Activated CD4-positive, alpha-beta T cell treated with anti-CD3 and anti-CD28 coated beads, Interleukin-2, amount 10 ng/mL, durations not matched to agents 7 days and 5 days (primary cell): ENCODE measurements at regions of chr5 and their contacts with region 1.

Region 1: DNA sequence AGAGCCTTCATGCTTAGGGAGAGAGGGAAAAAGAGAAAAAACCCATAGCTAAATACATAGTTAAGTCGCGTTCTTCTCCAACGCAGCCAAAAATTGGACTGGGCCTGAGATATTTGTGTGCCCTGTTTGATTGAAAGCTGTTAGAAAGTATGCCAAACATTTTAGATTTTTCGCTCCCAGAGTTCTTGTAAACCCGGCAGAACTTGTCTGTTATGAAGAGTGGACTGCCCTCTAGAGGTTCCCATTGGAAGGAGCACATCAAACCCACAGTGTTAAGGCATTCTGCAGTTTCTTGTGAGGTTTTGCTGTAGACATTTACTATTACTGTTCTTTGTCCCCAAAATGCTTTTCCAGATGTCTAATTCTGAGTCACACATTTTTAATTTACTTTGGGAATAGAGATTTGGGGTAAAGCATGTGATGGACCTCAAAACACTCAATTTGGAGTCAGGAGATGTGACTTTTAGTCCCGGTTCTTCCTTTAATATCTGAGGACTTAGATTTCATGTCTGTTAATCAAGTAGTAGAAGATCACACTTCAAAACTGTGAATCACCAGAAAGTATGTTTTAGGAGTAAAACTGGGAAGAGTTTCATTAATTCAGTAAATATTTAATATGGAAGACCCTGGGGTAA is 96.6 kb downstream of the PCSK1 start:
- DNase-seq: peak; percentile 73
- H3K4me3 Mint-ChIP-seq: no peak overlapping the region
- H3K27ac Mint-ChIP-seq: no peak overlapping the region
- H3K4me1 Mint-ChIP-seq: peaks cover 8% of the 10 kb centered on the region
- H3K27me3 Mint-ChIP-seq: peaks cover 12% of the 10 kb centered on the region

Region 2: DNA sequence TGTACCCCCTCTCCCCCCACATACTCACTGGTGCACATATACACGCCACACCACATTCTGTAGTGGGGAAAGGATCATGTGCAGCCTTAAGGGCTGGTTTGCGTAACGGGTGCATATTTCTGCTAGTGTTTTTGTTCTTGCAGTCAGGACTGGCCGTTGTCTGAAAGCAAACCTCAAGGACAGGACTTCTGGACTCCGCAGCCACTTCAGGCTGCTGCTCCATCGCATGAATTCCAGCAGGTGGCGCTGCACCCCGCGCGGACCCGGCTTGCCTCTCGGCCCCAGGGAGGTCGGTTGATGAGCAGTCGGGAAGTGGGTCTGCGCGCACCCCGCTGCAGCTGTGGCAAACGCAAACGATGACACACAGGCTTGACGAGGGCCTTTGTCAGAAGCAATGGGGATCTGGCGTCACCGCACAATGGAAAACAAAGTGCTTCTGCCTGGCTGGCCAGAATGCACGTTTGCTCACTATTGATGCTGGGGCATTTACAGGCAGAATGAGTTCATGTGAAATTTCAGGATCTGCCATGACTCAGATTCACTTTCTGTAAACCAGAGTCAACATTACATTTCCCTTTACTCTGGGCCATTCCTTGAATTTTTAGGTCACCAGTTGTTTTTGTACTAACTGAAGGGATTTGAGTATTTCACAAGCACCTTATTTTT is 477.7 kb before region 1 on chr5:
- CTCF ChIA-PET with region 1: interaction called, 10 read pairs
- POLR2A ChIA-PET with region 1: no interaction called
- DNase-seq: peak; percentile 90
- H3K4me3 Mint-ChIP-seq: peak overlapping the region; percentile 38
- H3K27ac Mint-ChIP-seq: peak overlapping the region; percentile 52
- H3K4me1 Mint-ChIP-seq: peaks cover 50% of the 10 kb centered on the region
- H3K27me3 Mint-ChIP-seq: no peaks in the 10 kb centered on the region